CD14-positive monocyte (primary cell): ENCODE measurements at regions of chr11 and their contacts with region 1.

Region 1: GRCh38 chr11:416757-417621 is 2.2 kb upstream of the SIGIRR start:
- DNase-seq: peak; percentile 43 to 48 (median 44)
- H3K4me3 ChIP-seq: peak overlapping the region; percentile 41 to 96 (median 79)
- H3K4me3 Mint-ChIP-seq: peak overlapping the region; percentile 89 to 97
- H3K27ac ChIP-seq: peak overlapping the region; percentile 71 to 90
- H3K27ac Mint-ChIP-seq: peak overlapping the region; percentile 71 to 92 (median 87)
- H3K4me1 ChIP-seq: peaks cover 41 to 54% of the 10 kb centered on the region in 2 donors
- H3K4me1 Mint-ChIP-seq: peaks cover 45% of the 10 kb centered on the region
- H3K27me3 ChIP-seq: no peaks in the 10 kb centered on the region
- H3K27me3 Mint-ChIP-seq: peaks cover 5 to 25% (median 11%) of the 10 kb centered on the region in 3 donors
- CTCF ChIP-seq: no peak

Region 2: GRCh38 chr11:363948-364761 is 52.8 kb before region 1 on chr11:
- intact Hi-C with region 1: no loop called
- DNase-seq: peak in 1 of 3 donors; percentile 6
- H3K4me3 ChIP-seq: no peak overlapping the region
- H3K4me3 Mint-ChIP-seq: no peak overlapping the region
- H3K27ac ChIP-seq: no peak overlapping the region
- H3K27ac Mint-ChIP-seq: no peak overlapping the region
- H3K4me1 ChIP-seq: no peaks in the 10 kb centered on the region
- H3K4me1 Mint-ChIP-seq: peaks cover 2% of the 10 kb centered on the region
- H3K27me3 ChIP-seq: peaks cover 15 to 18% of the 10 kb centered on the region in 2 donors
- H3K27me3 Mint-ChIP-seq: peaks cover 33 to 53% (median 39%) of the 10 kb centered on the region in 3 donors
- CTCF ChIP-seq: peak; percentile 35

Region 3: GRCh38 chr11:447923-448731 is 31.1 kb after region 1 on chr11:
- intact Hi-C with region 1: loop called (anchors 2 to 5 kb)
- DNase-seq: peak; percentile 85 to 88 (median 88)
- H3K4me3 ChIP-seq: peak overlapping the region; percentile 55 to 77 (median 68)
- H3K4me3 Mint-ChIP-seq: peak overlapping the region; percentile 82 to 90
- H3K27ac ChIP-seq: peak overlapping the region; percentile 82 to 84
- H3K27ac Mint-ChIP-seq: peak overlapping the region; percentile 93 to 98 (median 97)
- H3K4me1 ChIP-seq: peaks cover 27 to 34% of the 10 kb centered on the region in 2 donors
- H3K4me1 Mint-ChIP-seq: peaks cover 20% of the 10 kb centered on the region
- H3K27me3 ChIP-seq: peaks cover 0 to 5% of the 10 kb centered on the region in 2 donors
- H3K27me3 Mint-ChIP-seq: peaks cover 11 to 19% (median 12%) of the 10 kb centered on the region in 3 donors
- CTCF ChIP-seq: peak; percentile 85

Region 4: DNA sequence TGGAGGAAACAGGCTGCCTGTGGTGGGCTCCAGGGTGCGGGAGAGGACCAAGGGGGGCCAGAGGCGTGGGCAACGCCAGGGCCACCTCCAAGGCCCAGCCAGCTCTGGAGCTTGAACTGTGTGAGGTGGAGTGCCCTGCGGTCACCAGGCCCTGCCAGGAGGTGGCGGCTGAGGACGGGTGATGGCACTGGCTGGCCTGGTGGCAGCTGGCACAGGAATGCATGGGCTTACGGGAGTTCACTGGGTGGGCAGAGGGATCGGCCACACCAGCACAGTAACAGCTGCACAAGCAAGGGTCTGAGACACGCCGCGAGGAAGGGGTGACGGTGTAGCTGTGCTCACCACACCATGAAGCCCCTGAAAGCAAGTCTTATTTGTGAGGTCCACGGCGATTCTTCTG is 876.6 kb after region 1 on chr11:
- intact Hi-C with region 1: no loop called
- DNase-seq: peak in 2 of 3 donors; percentile 21 to 23
- H3K4me3 ChIP-seq: no peak overlapping the region
- H3K4me3 Mint-ChIP-seq: no peak overlapping the region
- H3K27ac ChIP-seq: no peak overlapping the region
- H3K27ac Mint-ChIP-seq: peak overlapping the region in 1 of 7 donors; percentile 40
- H3K4me1 ChIP-seq: peaks cover 1 to 7% of the 10 kb centered on the region in 2 donors
- H3K4me1 Mint-ChIP-seq: peaks cover 8% of the 10 kb centered on the region
- H3K27me3 ChIP-seq: no peaks in the 10 kb centered on the region
- H3K27me3 Mint-ChIP-seq: no peaks in the 10 kb centered on the region
- CTCF ChIP-seq: peak; percentile 50